ENCODE measurements at regions of chr1 and their contacts with region 1.

Region 1: GRCh38 chr1:180863158-180863775 is 49.4 kb upstream of the KIAA1614 start:
- DNase-seq: no peak
- H3K4me3 ChIP-seq: no peak overlapping the region
- H3K27ac ChIP-seq: no peak overlapping the region
- H3K4me1 ChIP-seq: no peaks in the 10 kb centered on the region
- H3K27me3 ChIP-seq: no peaks in the 10 kb centered on the region
- CTCF ChIP-seq: peak in 2 of 3 experiments; percentile 43 to 53; a peak in 2 of 4 replicates
- EP300 ChIP-seq: no peak
- POLR2A ChIP-seq: no peak
- RAD21 ChIP-seq: peak; percentile 80 to 82

Region 2: DNA sequence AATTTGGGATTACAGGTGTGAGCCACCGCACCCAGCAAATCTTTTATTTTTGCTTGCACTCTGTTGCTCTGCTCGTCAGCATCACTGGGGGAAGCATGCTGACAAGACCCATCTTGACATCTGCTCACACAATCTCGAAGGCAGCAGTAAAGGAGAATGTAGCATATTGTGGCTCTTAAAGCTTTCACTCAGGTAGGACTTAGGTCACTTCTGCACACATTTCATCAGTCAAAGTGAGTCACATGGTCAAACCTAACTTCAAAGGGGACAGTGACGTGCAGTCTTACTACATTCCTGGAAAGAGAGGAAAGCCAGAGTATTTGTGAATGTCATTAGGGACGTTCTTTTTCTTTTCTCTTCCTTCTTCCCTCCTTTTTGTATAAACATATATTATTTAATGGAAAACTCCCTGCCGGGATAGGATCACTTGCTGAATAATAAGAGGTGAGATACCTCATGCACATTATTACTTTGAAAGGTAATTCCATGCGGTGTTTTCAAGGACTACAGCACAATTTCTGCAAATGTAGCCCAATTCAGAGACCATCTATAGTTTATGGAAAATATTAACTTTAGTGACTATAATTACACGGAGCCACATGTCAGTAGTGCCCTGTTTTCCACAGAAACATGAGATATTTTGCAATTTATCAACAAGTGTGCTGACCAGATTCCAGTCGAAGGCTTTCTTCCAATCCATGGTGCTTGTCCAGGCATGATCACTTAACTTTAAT is 341.6 kb before region 1 on chr1:
- CTCF ChIA-PET with region 1: interaction called, 47 read pairs
- POLR2A ChIA-PET with region 1: interaction called, 5 read pairs
- DNase-seq: no peak
- H3K4me3 ChIP-seq: no peak overlapping the region
- H3K27ac ChIP-seq: no peak overlapping the region
- H3K4me1 ChIP-seq: peaks cover 0 to 8% (median 2%) of the 10 kb centered on the region in 4 experiments; a peak in 3 of 7 replicates
- H3K27me3 ChIP-seq: no peaks in the 10 kb centered on the region
- CTCF ChIP-seq: no peak
- EP300 ChIP-seq: no peak
- POLR2A ChIP-seq: no peak
- RAD21 ChIP-seq: no peak

Region 3: GRCh38 chr1:180533266-180533987 is 329.8 kb before region 1 on chr1:
- CTCF ChIA-PET with region 1: interaction called, 77 read pairs
- POLR2A ChIA-PET with region 1: no interaction called
- DNase-seq: peak; percentile 15 to 84
- H3K4me3 ChIP-seq: no peak overlapping the region
- H3K27ac ChIP-seq: no peak overlapping the region
- H3K4me1 ChIP-seq: peaks cover 0 to 2% (median 0%) of the 10 kb centered on the region in 4 experiments; a peak in 2 of 7 replicates
- H3K27me3 ChIP-seq: no peaks in the 10 kb centered on the region
- CTCF ChIP-seq: peak; percentile 78 to 92 (median 87)
- EP300 ChIP-seq: no peak
- POLR2A ChIP-seq: no peak
- RAD21 ChIP-seq: peak; percentile 95 to 98

Region 4: GRCh38 chr1:180845352-180845751 is 17.9 kb before region 1 on chr1:
- CTCF ChIA-PET with region 1: interaction called, 10 read pairs
- POLR2A ChIA-PET with region 1: no interaction called
- DNase-seq: no peak
- H3K4me3 ChIP-seq: no peak overlapping the region
- H3K27ac ChIP-seq: no peak overlapping the region
- H3K4me1 ChIP-seq: peaks cover 0 to 3% (median 0%) of the 10 kb centered on the region in 4 experiments; a peak in 2 of 7 replicates
- H3K27me3 ChIP-seq: no peaks in the 10 kb centered on the region
- CTCF ChIP-seq: no peak
- EP300 ChIP-seq: no peak
- POLR2A ChIP-seq: no peak
- RAD21 ChIP-seq: no peak

Region 5: GRCh38 chr1:181021811-181022434 is 158.7 kb after region 1 on chr1:
- CTCF ChIA-PET with region 1: no interaction called
- POLR2A ChIA-PET with region 1: no interaction called
- DNase-seq: peak; percentile 25 to 63
- H3K4me3 ChIP-seq: peak overlapping the region; percentile 82 to 99 (median 94)
- H3K27ac ChIP-seq: peak overlapping the region; percentile 81
- H3K4me1 ChIP-seq: peaks cover 0 to 4% (median 3%) of the 10 kb centered on the region in 4 experiments; a peak in 3 of 7 replicates
- H3K27me3 ChIP-seq: no peaks in the 10 kb centered on the region; a peak in 1 of 7 replicates
- CTCF ChIP-seq: no peak
- EP300 ChIP-seq: no peak
- POLR2A ChIP-seq: peak in 1 of 2 experiments; percentile 53; a peak in 1 of 3 replicates
- RAD21 ChIP-seq: no peak

Measured in H1 (cell line).